CD4-positive, alpha-beta T cell (primary cell): ENCODE measurements at regions of chr7 and their contacts with region 1.

Region 1: DNA sequence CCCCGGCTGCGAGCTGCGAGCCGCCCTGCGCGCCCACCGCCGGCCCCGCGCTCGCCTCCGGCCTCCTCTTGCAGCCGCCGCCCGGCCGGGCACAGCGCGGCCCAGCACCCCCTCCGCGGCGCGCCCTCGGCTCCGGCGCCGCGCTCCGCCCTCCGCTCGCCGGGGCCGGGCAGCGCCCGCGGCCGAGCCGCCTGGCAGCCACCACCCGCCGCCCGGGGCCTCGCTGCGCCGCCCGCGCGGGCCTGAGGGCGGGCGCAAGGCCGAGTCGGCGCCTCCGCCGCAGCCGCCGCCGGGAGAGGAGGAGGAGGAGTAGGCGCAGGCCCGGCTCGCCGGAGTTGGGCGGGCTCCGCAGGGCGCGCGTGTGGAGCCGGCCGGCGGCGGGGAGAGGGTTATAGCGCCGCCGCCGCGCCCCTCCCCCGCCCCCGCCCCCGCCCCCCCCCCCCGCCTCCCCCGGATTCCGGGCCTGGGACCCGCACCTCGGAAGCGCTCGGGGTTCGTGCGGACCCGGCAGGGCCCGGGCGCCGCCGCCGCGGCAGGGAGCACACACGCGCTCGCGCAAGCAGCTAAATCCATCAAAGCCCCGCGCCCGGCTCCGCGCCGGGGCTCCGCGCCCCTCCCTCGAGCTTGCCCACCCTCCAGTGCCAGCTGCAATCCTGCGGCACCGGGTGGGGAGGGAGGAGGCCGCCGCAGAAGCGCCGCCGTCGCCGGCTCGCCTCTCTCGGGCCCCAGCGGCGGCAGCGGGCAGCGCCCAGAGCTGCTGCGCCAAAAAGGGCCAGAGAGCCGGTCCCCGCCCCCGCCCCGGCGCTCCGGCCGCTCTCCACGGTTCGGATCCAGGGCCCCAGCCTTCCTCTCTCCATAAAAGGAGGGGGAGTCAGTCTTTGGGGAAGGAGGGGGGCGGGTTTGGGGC is at the start of gene PDGFA:
- DNase-seq: peak in 3 of 14 experiments; percentile 15 to 44 (median 34)
- ATAC-seq: no peak
- H3K4me3 ChIP-seq: no peak within 1 kb of the TSS
- H3K4me3 Mint-ChIP-seq: peak within 1 kb of the TSS; percentile 85
- H3K27ac ChIP-seq: no peak within 1 kb of the TSS
- H3K27ac Mint-ChIP-seq: no peak within 1 kb of the TSS
- H3K4me1 ChIP-seq: peaks cover 41% of the 10 kb centered on the region
- H3K4me1 Mint-ChIP-seq: peaks cover 10% of the 10 kb centered on the region
- H3K27me3 ChIP-seq: peaks cover 42 to 48% of the 10 kb centered on the region in 2 experiments
- H3K27me3 Mint-ChIP-seq: peaks cover 60% of the 10 kb centered on the region
- CTCF ChIP-seq: no peak
- total RNA-seq, gene PDGFA: 0.55 to 0.70 TPM

Region 2: DNA sequence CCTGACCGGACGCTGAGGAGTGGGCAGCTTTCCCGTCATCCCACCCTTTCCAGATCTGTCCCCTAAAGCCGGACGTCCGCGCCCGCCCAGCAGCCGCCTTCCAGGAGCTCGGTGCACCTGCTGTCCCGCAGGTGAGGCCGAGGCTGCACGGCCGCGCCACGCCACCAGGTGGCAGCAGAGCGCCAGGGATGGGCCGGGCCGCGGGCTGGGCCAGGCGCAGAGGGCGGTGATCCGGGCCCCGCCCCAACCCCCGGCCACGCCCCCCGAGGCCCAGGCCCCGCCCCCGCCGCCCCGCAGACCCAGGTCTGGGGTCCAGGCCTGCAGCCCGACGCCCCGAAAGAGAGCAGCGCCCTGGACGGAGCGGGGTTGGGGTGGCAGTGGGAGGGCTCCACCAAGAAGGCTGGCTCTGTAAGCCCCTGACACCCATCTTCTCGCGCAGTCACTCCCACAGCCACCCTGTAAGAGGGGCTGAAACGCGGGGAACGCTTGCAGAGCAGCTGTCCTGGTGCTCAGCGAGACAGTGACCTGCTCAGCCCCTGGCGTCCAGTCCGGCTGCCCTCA is 197.5 kb before region 1 on chr7:
- CTCF ChIA-PET with region 1: no interaction called
- POLR2A ChIA-PET with region 1: no interaction called
- intact Hi-C with region 1: loop called in 1 of 2 experiments (anchors 10 kb)
- DNase-seq: peak; percentile 67 to 94 (median 86)
- ATAC-seq: peak; percentile 100
- H3K4me3 ChIP-seq: peak overlapping the region; percentile 5
- H3K4me3 Mint-ChIP-seq: no peak overlapping the region
- H3K27ac ChIP-seq: no peak overlapping the region
- H3K27ac Mint-ChIP-seq: no peak overlapping the region
- H3K4me1 ChIP-seq: peaks cover 10% of the 10 kb centered on the region
- H3K4me1 Mint-ChIP-seq: no peaks in the 10 kb centered on the region
- H3K27me3 ChIP-seq: peaks cover 10 to 24% of the 10 kb centered on the region in 2 experiments
- H3K27me3 Mint-ChIP-seq: peaks cover 41% of the 10 kb centered on the region
- CTCF ChIP-seq: peak; percentile 69

Region 3: GRCh38 chr7:503575-504111 is 16.1 kb before region 1 on chr7:
- CTCF ChIA-PET with region 1: no interaction called
- POLR2A ChIA-PET with region 1: no interaction called
- intact Hi-C with region 1: no loop called
- DNase-seq: no peak
- ATAC-seq: no peak
- H3K4me3 ChIP-seq: no peak overlapping the region
- H3K4me3 Mint-ChIP-seq: no peak overlapping the region
- H3K27ac ChIP-seq: no peak overlapping the region
- H3K27ac Mint-ChIP-seq: no peak overlapping the region
- H3K4me1 ChIP-seq: no peaks in the 10 kb centered on the region
- H3K4me1 Mint-ChIP-seq: no peaks in the 10 kb centered on the region
- H3K27me3 ChIP-seq: no peaks in the 10 kb centered on the region
- H3K27me3 Mint-ChIP-seq: no peaks in the 10 kb centered on the region
- CTCF ChIP-seq: no peak

Region 4: GRCh38 chr7:636396-636795 is 116.7 kb after region 1 on chr7:
- CTCF ChIA-PET with region 1: no interaction called
- POLR2A ChIA-PET with region 1: interaction called, 3 read pairs
- intact Hi-C with region 1: loop called in 1 of 2 experiments (anchors 5 kb)
- DNase-seq: peak; percentile 28 to 77 (median 47)
- ATAC-seq: peak; percentile 59
- H3K4me3 ChIP-seq: no peak overlapping the region
- H3K4me3 Mint-ChIP-seq: no peak overlapping the region
- H3K27ac ChIP-seq: no peak overlapping the region
- H3K27ac Mint-ChIP-seq: no peak overlapping the region
- H3K4me1 ChIP-seq: peaks cover 8% of the 10 kb centered on the region
- H3K4me1 Mint-ChIP-seq: peaks cover 18% of the 10 kb centered on the region
- H3K27me3 ChIP-seq: no peaks in the 10 kb centered on the region
- H3K27me3 Mint-ChIP-seq: no peaks in the 10 kb centered on the region
- CTCF ChIP-seq: peak; percentile 23